ENCODE measurements at regions of chr3 and their contacts with region 1.

Region 1: GRCh38 chr3:187223799-187224198 is 26.5 kb downstream of the RTP1 start:
- DNase-seq: no peak
- ATAC-seq: no peak
- H3K4me3 Mint-ChIP-seq: no peak overlapping the region
- H3K27ac Mint-ChIP-seq: no peak overlapping the region
- H3K4me1 Mint-ChIP-seq: no peaks in the 10 kb centered on the region
- H3K27me3 Mint-ChIP-seq: peaks cover 3% of the 10 kb centered on the region

Region 2: GRCh38 chr3:186915806-186916796 is 307.7 kb before region 1 on chr3:
- CTCF ChIA-PET with region 1: no interaction called
- POLR2A ChIA-PET with region 1: no interaction called
- intact Hi-C with region 1: no loop called
- DNase-seq: no peak
- ATAC-seq: no peak
- H3K4me3 Mint-ChIP-seq: no peak overlapping the region
- H3K27ac Mint-ChIP-seq: no peak overlapping the region
- H3K4me1 Mint-ChIP-seq: peaks cover 27% of the 10 kb centered on the region
- H3K27me3 Mint-ChIP-seq: no peaks in the 10 kb centered on the region

Region 3: DNA sequence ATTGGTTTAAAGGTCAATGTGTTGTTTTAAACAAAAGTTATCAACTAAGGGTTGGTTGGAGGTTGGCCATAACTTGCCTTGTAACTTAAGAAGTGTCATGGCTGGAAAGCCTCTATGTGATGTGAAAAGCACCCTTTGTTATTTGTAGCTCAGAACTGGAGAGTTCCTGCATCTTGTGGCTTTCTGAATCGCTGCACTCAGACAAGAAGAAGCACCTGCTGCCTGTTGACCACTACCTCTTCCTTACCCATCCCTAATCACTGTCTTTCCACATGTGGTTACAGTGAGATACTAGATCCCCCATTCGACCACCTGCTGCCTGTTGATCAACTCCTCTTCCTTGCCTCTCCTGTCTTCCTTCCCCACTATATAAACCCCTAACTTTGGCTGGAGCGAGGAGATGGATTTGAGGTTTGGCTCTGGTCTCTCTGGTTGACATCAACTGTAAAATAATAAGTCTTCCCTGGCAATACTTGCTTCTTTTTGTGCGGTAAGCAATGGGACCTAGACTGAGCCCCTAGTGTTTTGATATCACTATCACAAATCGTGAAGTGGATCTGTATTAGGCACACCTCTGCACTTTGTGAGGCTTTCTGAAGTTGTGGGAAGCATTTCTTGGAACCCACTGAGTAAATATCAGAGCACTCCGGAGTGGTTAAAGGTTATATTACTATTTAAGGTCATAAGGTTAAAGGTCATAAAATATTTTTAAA is 98.3 kb before region 1 on chr3:
- CTCF ChIA-PET with region 1: no interaction called
- POLR2A ChIA-PET with region 1: no interaction called
- intact Hi-C with region 1: no loop called
- DNase-seq: no peak
- ATAC-seq: no peak
- H3K4me3 Mint-ChIP-seq: no peak overlapping the region
- H3K27ac Mint-ChIP-seq: no peak overlapping the region
- H3K4me1 Mint-ChIP-seq: peaks cover 16% of the 10 kb centered on the region
- H3K27me3 Mint-ChIP-seq: no peaks in the 10 kb centered on the region

Region 4: GRCh38 chr3:187210545-187211327 is 13.1 kb before region 1 on chr3:
- CTCF ChIA-PET with region 1: interaction called, 10 read pairs
- POLR2A ChIA-PET with region 1: interaction called, 3 read pairs
- intact Hi-C with region 1: no loop called
- DNase-seq: no peak
- ATAC-seq: no peak
- H3K4me3 Mint-ChIP-seq: no peak overlapping the region
- H3K27ac Mint-ChIP-seq: no peak overlapping the region
- H3K4me1 Mint-ChIP-seq: no peaks in the 10 kb centered on the region
- H3K27me3 Mint-ChIP-seq: no peaks in the 10 kb centered on the region

Region 5: GRCh38 chr3:187291001-187291511 is 67.3 kb after region 1 on chr3:
- CTCF ChIA-PET with region 1: interaction called, 4 read pairs
- POLR2A ChIA-PET with region 1: no interaction called
- intact Hi-C with region 1: loop called in 1 of 2 experiments (anchors 5 kb)
- DNase-seq: no peak
- ATAC-seq: no peak
- H3K4me3 Mint-ChIP-seq: no peak overlapping the region
- H3K27ac Mint-ChIP-seq: no peak overlapping the region
- H3K4me1 Mint-ChIP-seq: peaks cover 6% of the 10 kb centered on the region
- H3K27me3 Mint-ChIP-seq: peaks cover 41% of the 10 kb centered on the region

Measured in activated CD4-positive, alpha-beta T cell treated with anti-CD3 and anti-CD28 coated beads for 36 hours (primary cell).